WTC11 (cell line): ENCODE measurements at regions of chr1 and their contacts with region 1.

Region 1: DNA sequence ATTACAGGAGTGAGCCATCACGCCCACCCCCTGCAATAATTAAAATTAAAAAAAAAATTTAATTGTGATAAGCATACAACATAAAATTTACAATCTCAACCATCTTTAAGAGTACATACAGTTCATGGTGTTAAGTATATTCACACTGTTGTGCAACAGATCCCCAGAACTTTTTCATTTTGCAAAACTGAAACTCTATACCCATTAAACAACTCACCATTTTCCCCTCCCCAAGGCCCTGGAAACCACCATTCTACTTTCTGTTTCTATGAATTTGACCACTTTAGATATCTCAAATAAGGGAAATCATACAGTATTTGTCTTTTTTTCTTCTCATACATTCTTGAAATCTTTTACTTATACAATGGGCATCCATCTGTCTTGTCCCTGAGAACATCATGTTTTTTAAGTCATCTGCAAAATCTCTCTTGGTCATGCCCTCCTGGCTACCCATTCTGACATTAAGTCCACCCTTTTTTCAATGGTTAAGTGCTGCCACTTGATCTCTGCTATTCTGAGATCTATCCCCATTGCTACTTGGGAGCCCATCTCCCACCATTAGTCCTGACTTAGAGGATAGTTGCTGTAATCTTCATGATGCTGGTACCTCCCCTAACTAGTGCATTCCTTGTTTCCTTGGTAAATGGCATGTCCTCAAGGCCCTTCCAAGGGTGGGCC is 39.4 kb upstream of the ZFYVE9 start:
- DNase-seq: no peak
- ATAC-seq: no peak
- H3K4me3 Mint-ChIP-seq: no peak overlapping the region
- H3K27ac Mint-ChIP-seq: no peak overlapping the region
- H3K4me1 Mint-ChIP-seq: peaks cover 5% of the 10 kb centered on the region; the same call in 1 of the 2 replicates
- H3K27me3 Mint-ChIP-seq: no peaks in the 10 kb centered on the region
- CTCF ChIP-seq: no peak

Region 2: GRCh38 chr1:52164604-52165003 is 62.1 kb after region 1 on chr1:
- CTCF ChIA-PET with region 1: no interaction called
- POLR2A ChIA-PET with region 1: no interaction called
- DNase-seq: no peak
- ATAC-seq: no peak
- H3K4me3 Mint-ChIP-seq: no peak overlapping the region
- H3K27ac Mint-ChIP-seq: no peak overlapping the region
- H3K4me1 Mint-ChIP-seq: no peaks in the 10 kb centered on the region
- H3K27me3 Mint-ChIP-seq: no peaks in the 10 kb centered on the region
- CTCF ChIP-seq: no peak

Region 3: DNA sequence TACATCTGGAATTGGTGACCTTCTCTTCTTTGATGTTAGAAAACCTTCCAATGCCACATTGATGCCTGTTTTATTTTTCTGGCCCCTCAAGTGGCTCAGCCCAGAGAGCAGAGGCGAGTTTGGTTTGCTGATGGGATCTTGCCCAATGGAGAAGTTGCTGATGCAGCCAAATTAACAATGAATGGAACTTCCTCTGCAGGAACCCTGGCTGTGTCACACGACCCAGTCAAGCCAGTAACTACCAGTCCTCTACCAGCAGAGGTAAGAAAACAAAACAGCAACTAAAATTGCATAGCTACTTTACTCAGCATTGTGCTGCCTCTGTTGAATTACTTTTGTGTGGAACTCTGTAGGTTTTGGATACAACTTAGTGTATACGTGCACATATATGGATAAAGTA is 165.9 kb after region 1 on chr1:
- CTCF ChIA-PET with region 1: no interaction called
- POLR2A ChIA-PET with region 1: interaction called, 15 read pairs
- DNase-seq: peak; percentile 29
- ATAC-seq: peak; percentile 99
- H3K4me3 Mint-ChIP-seq: no peak overlapping the region
- H3K27ac Mint-ChIP-seq: peak overlapping the region; percentile 94
- H3K4me1 Mint-ChIP-seq: peaks cover 16% of the 10 kb centered on the region
- H3K27me3 Mint-ChIP-seq: no peaks in the 10 kb centered on the region
- CTCF ChIP-seq: no peak